Psoas muscle (tissue), 8 donors: ENCODE measurements at regions of chr4 and their contacts with region 1.

Region 1: GRCh38 chr4:185183619-185184281 is 20.1 kb downstream of the CFAP97 start:
- DNase-seq: peak; percentile 59 to 68
- ATAC-seq: peak; percentile 55 to 87 (median 76)
- H3K4me3 ChIP-seq: no peak overlapping the region
- H3K27ac ChIP-seq: no peak overlapping the region
- H3K4me1 ChIP-seq: no peaks in the 10 kb centered on the region
- H3K27me3 ChIP-seq: no peaks in the 10 kb centered on the region
- CTCF ChIP-seq: peak; percentile 85

Region 2: GRCh38 chr4:185005216-185005819 is 178.4 kb before region 1 on chr4:
- intact Hi-C with region 1: loop called (anchors 1 to 10 kb)
- DNase-seq: peak; percentile 80 to 90
- ATAC-seq: peak; percentile 93 to 99 (median 96)
- H3K4me3 ChIP-seq: peak overlapping the region; percentile 53
- H3K27ac ChIP-seq: no peak overlapping the region
- H3K4me1 ChIP-seq: no peaks in the 10 kb centered on the region
- H3K27me3 ChIP-seq: peaks cover 0 to 16% (median 3%) of the 10 kb centered on the region in 3 donors
- CTCF ChIP-seq: peak; percentile 95

Region 3: DNA sequence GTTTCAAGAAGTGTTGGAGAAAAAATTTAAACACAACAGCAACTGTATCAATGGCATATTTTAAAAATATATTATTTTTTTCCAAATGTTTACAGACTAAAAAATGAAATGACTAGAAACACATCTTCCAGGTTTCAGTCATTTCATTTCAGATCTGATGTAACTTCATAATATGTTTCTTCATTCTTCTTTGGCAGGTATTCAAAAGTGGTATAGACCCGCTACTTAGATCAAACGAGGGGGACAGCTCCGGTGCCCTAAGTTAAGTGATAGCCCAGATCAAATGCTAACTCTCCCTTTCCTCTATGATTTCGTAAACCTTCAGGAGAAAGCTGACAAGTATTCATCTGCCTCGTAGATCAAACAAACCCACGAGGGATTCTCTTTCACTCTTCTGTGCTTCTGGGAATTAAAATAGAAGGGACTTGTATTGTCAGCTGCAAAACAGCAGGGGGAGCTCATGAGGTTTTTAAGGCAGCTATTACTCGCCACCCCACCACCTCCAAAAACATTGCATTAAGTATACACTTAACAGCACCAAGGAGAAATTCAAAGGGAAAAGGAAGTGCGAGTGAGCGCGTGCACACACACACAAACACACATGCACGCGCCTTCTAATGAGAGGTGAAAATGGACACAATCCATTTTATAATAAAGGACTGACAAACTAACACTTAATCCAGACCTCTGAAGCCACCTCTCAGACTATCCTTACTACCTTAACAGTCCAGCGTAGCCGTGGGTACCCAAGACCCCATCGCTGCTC is 144.1 kb before region 1 on chr4:
- intact Hi-C with region 1: loop called in 1 of 2 experiments (anchors 5 kb)
- DNase-seq: no peak
- ATAC-seq: peak; percentile 77 to 96 (median 90)
- H3K4me3 ChIP-seq: peak overlapping the region; percentile 42
- H3K27ac ChIP-seq: no peak overlapping the region
- H3K4me1 ChIP-seq: no peaks in the 10 kb centered on the region
- H3K27me3 ChIP-seq: no peaks in the 10 kb centered on the region
- CTCF ChIP-seq: peak; percentile 80

Region 4: DNA sequence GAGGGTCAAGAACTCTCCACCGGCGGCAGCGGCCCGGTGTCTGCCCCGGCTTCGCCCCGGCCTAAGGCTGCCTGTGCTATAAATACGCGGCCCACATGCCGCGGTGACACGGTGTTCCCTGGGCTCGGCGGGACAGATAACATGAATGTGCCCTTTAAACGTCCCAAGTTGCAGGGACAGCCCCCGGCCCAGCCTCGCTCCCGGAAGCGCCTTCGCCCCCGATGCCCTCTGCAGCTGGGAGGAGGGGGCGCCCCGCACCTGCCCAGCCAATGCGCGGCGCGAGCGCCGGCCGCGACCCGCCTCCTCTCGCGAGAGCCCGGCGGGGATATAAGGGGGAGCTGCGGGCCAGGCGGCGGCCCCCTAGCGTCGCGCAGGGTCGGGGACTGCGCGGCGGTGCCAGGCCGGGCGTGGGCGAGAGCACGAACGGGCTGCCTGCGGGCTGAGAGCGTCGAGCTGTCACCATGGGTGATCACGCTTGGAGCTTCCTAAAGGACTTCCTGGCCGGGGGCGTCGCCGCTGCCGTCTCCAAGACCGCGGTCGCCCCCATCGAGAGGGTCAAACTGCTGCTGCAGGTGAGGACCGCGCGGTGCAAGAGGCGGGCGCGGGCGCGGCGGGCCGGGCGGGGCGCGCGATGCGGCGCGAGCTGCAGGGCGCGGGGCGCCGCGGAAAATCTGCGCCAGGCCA is 40.7 kb before region 1 on chr4 and contains the start of gene SLC25A4:
- intact Hi-C with region 1: loop called (anchors 5 kb)
- DNase-seq: peak; percentile 90 to 95
- ATAC-seq: peak; percentile 84 to 88 (median 86)
- H3K4me3 ChIP-seq: peak within 1 kb of the TSS; percentile 72
- H3K27ac ChIP-seq: peak within 1 kb of the TSS; percentile 91
- H3K4me1 ChIP-seq: peaks cover 57% of the 10 kb centered on the region
- H3K27me3 ChIP-seq: no peaks in the 10 kb centered on the region
- CTCF ChIP-seq: peak; percentile 57
- total RNA-seq, gene SLC25A4: 384 to 1,107 (median 729) TPM

Region 5: DNA sequence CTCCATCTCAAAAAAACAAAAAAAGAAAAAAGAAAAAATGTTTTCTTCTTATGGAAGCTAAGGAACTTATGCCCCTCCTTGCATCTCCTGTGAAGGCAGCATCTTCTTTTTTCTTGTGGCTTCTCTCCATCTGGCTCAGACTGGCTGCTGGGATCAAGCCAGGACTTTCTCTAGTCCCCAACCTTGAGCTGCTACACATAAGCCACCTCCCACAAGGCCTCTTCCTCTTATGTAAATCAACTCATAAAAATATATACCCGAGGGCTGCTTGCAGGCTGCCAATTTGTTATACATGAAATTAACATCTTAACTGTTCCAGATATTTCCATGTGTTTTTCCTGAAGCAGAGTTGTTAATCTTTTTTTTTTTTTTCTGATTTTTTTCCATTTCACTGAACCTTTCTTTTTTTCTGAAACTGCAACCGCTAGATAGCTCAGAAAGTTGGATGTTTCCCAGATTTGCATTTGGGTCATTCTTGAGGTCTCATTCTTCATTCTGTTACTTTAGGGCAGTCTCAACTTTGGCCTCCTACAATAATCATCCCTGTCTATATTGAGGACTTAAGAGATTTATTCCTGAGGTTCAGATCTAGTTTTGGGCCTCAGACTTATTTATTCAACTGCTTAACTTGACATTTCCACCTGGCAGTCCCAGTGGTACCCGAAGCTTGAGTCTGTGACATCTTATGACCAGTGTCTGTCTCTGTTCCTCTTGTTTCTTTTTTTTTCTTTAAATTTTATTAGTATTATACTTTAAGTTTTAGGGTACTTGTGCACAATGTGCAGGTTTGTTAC is 36.0 kb after region 1 on chr4:
- intact Hi-C with region 1: no loop called
- DNase-seq: peak in 1 of 2 donors; percentile 66
- ATAC-seq: peak; percentile 25 to 73 (median 52)
- H3K4me3 ChIP-seq: no peak overlapping the region
- H3K27ac ChIP-seq: no peak overlapping the region
- H3K4me1 ChIP-seq: peaks cover 31% of the 10 kb centered on the region
- H3K27me3 ChIP-seq: no peaks in the 10 kb centered on the region
- CTCF ChIP-seq: no peak